MCF 10A (cell line): ENCODE measurements at regions of chr3 and their contacts with region 1.

Region 1: GRCh38 chr3:33096093-33096868 is 665 bp downstream of the GLB1 start:
- DNase-seq: peak; percentile 36
- H3K4me3 Mint-ChIP-seq: peak overlapping the region; percentile 93
- H3K27ac Mint-ChIP-seq: peak overlapping the region; percentile 86
- H3K4me1 Mint-ChIP-seq: peaks cover 7% of the 10 kb centered on the region
- H3K27me3 Mint-ChIP-seq: no peaks in the 10 kb centered on the region
- CTCF ChIP-seq: no peak

Region 2: DNA sequence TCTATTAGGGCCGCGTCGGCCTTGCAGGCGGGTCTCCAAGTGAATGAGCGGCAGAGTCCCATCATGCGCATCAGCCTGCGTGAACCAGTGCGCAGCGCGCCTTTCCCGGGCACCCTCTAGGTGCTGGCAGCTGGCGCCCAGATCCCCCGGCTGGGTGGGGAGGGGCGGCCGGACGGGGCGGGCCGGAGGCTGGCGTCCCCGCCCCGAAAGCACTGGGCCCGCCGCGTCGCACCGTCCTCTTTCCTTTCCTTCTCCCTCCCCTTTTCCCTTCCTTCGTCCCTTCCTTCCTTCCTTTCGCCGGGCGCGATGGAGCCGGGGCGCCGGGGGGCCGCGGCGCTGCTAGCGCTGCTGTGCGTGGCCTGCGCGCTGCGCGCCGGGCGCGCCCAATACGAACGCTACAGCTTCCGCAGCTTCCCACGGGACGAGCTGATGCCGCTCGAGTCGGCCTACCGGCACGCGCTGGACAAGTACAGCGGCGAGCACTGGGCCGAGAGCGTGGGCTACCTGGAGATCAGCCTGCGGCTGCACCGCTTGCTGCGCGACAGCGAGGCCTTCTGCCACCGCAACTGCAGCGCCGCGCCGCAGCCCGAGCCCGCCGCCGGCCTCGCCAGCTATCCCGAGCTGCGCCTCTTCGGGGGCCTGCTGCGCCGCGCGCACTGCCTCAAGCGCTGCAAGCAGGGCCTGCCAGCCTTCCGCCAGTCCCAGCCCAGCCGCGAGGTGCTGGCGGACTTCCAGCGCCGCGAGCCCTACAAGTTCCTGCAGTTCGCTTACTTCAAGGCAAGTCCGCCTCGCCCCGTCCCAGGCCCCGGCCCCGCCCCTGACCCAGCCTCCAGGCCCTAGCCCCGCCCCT is 17.7 kb after region 1 on chr3 and contains the start of gene CRTAP:
- CTCF ChIA-PET with region 1: interaction called, 4 read pairs
- POLR2A ChIA-PET with region 1: interaction called, 31 read pairs
- intact Hi-C with region 1: loop called (anchors 2 kb)
- DNase-seq: peak; percentile 94
- H3K4me3 Mint-ChIP-seq: peak within 1 kb of the TSS; percentile 83
- H3K27ac Mint-ChIP-seq: peak within 1 kb of the TSS; percentile 79
- H3K4me1 Mint-ChIP-seq: peaks cover 30% of the 10 kb centered on the region
- H3K27me3 Mint-ChIP-seq: no peaks in the 10 kb centered on the region
- CTCF ChIP-seq: no peak
- total RNA-seq, gene CRTAP: 179 and 182 TPM in 2 replicates